Activated CD8-positive, alpha-beta T cell treated with anti-CD3 and anti-CD28 coated beads for 36 hours (primary cell): ENCODE measurements at regions of chr11 and their contacts with region 1.

Region 1: DNA sequence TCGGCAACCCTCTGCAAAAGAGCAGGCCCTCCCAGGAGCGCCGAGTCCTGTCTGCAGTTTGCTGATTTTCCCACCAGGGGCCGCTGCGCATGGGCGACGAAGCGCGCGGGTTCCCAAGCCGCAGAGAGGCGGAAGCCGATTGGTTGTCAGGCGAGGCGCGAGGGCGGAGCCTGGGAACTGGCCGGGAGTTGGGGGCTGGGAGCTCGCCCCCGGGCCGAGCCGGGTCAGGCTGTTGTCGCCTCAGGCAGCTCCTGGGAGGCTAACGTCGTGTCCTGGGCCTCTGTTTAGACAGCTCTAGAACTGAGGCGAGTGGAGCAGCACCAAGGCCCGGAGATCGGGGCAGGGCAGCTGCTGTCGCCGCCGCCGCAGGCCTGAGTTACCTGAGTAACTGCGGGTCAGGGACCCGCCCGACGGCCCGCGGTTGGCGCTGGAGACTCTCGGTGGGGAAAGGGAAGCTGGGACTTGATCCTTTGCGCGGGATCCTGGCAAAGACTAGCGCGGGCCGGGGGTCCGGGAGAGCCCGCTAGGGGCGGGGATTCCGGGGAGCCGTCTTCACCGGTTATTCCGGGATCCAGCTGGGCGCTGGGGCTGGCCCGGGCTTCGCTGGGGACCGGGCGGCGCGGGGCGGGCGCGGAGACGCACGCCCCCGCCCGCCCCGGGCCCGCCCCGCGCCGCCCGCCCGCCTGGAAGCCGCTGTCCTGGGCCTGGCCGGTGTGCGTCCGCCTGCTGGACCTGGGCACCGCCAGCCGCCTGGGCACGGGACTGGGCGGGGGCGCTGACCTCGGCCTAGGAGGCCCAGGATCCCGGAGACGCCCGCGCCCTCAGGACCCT is at the start of gene STIM1:
- DNase-seq: peak; percentile 98
- ATAC-seq: peak; percentile 79
- H3K4me3 Mint-ChIP-seq: peak within 1 kb of the TSS; percentile 87
- H3K27ac Mint-ChIP-seq: peak within 1 kb of the TSS; percentile 98
- H3K4me1 Mint-ChIP-seq: peaks cover 60% of the 10 kb centered on the region
- H3K27me3 Mint-ChIP-seq: no peaks in the 10 kb centered on the region
- CTCF ChIP-seq: peak; percentile 89
- total RNA-seq, gene STIM1: 60.8 to 61.4 TPM

Region 2: GRCh38 chr11:3609416-3610265 is 245.6 kb before region 1 on chr11:
- CTCF ChIA-PET with region 1: no interaction called
- POLR2A ChIA-PET with region 1: no interaction called
- intact Hi-C with region 1: no loop called
- DNase-seq: peak; percentile 25
- ATAC-seq: peak; percentile 66
- H3K4me3 Mint-ChIP-seq: no peak overlapping the region
- H3K27ac Mint-ChIP-seq: no peak overlapping the region
- H3K4me1 Mint-ChIP-seq: peaks cover 6% of the 10 kb centered on the region
- H3K27me3 Mint-ChIP-seq: no peaks in the 10 kb centered on the region
- CTCF ChIP-seq: peak; percentile 84

Region 3: DNA sequence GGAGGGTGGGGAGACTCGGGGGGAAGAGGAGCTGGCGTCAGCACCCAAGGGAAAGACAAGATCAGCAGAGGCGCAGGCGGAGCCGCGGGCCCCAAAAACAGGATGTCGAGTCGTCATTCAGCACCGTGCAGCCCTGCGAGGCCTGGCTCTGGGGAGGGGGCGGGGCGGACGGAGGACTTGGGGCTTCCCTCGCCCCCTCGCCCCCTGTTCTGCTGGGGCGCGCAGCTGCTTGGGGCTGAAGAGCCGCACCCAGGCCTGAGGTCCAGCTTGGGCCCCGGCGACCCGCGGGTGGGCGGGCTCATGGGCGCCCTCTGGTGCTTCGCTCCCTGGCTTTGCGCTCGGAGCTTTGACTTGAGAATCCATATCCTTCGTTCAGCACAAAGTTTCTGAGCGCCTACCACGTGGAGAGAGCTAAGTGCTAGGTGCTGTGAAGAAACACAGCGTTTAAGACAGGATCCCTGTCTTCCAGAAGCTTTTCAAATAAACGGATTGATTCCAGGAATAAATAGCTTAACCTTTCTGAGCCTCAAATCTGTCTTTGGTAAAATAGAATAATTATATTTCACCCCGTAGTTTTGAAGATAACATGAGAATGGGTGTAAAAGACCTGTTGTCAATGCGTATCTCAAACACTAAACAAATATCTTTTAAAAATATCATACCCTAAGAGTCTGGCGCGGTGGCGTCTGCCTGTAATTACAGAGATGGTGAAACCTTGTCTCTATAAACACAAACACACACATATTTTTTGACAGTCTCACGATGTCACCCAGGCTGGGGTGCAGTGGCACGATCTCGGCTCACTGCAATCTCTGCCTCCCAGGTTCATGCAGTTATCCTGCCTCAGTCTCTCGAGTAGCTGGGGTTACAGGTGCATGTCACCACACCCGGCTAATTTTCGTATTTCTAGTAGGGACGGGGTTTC is 13.5 kb before region 1 on chr11:
- CTCF ChIA-PET with region 1: interaction called, 221 read pairs
- POLR2A ChIA-PET with region 1: interaction called, 216 read pairs
- intact Hi-C with region 1: no loop called
- DNase-seq: peak; percentile 40
- ATAC-seq: no peak
- H3K4me3 Mint-ChIP-seq: peak overlapping the region; percentile 87
- H3K27ac Mint-ChIP-seq: peak overlapping the region; percentile 94
- H3K4me1 Mint-ChIP-seq: peaks cover 51% of the 10 kb centered on the region
- H3K27me3 Mint-ChIP-seq: no peaks in the 10 kb centered on the region
- CTCF ChIP-seq: peak; percentile 69

Region 4: DNA sequence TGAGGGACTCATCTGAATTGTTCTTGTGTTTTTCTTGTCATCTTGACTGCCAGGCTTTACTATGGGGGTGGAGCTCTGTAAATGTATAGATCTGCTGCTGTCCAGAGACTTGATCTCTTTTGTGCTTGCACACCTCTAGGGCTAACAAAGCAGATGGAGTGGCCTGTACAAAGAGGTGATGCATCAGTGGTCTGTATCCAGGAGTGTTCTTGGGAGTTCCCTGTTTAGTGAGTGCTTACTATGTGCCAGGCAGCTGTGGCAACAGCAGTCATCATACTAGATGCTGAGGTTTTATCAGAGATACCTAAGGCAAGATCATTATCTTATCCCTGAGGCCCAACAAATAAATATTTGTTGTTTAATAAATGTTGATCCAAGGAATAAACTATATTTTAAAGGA is 33.7 kb after region 1 on chr11:
- CTCF ChIA-PET with region 1: interaction called, 13 read pairs
- POLR2A ChIA-PET with region 1: no interaction called
- intact Hi-C with region 1: loop called (anchors 5 kb)
- DNase-seq: no peak
- ATAC-seq: no peak
- H3K4me3 Mint-ChIP-seq: no peak overlapping the region
- H3K27ac Mint-ChIP-seq: no peak overlapping the region
- H3K4me1 Mint-ChIP-seq: peaks cover 58% of the 10 kb centered on the region
- H3K27me3 Mint-ChIP-seq: no peaks in the 10 kb centered on the region
- CTCF ChIP-seq: no peak

Region 5: GRCh38 chr11:3927133-3927796 is 72.1 kb after region 1 on chr11:
- CTCF ChIA-PET with region 1: interaction called, 24 read pairs
- POLR2A ChIA-PET with region 1: interaction called, 6 read pairs
- intact Hi-C with region 1: no loop called
- DNase-seq: no peak
- ATAC-seq: no peak
- H3K4me3 Mint-ChIP-seq: no peak overlapping the region
- H3K27ac Mint-ChIP-seq: no peak overlapping the region
- H3K4me1 Mint-ChIP-seq: peaks cover 36% of the 10 kb centered on the region
- H3K27me3 Mint-ChIP-seq: no peaks in the 10 kb centered on the region
- CTCF ChIP-seq: no peak

Region 6: DNA sequence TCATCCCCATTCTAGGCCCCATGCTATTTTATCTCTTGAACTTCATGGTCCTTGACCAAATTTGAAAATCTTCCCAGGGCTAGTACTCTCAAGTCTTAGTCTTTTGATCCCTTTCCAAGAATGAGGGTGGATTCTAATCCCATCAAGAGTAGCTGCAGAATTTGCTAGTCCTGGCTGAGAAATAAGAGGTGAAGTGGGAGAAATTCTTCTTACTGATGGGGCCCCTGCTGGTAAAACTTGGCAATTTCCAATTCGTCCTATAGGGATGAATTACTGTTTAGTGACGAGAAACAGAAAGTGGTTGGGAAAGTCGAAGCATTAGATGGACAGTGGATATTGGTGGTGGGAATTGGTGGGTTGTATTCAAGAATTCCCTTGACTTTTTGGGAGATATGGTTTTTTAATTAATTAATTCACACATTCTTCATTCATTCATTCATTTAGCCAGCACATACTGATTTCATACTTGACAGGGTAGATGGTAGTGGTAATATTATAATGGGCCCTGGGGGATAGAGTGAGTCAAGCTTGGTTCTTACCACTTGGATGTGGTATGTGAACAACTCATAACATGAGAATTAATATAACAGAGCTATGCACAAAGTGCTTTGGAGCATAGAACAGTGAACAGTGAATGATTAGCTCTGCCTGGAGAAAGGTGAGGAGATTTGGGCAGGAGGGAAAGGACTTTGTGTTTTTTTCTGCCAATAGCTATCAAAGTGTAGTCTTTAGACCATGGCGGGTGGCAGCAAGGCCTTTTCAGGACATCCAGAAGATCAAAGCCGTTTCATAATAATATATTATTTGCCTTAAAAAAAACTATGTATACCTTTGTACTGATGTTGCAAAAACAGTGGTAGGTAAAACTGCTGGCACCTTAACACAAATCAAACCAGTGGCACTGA is 104.1 kb after region 1 on chr11:
- CTCF ChIA-PET with region 1: interaction called, 36 read pairs
- POLR2A ChIA-PET with region 1: interaction called, 11 read pairs
- intact Hi-C with region 1: loop called (anchors 5 kb)
- DNase-seq: no peak
- ATAC-seq: peak; percentile 64
- H3K4me3 Mint-ChIP-seq: no peak overlapping the region
- H3K27ac Mint-ChIP-seq: no peak overlapping the region
- H3K4me1 Mint-ChIP-seq: peaks cover 77% of the 10 kb centered on the region
- H3K27me3 Mint-ChIP-seq: no peaks in the 10 kb centered on the region
- CTCF ChIP-seq: peak; percentile 11

Region 7: DNA sequence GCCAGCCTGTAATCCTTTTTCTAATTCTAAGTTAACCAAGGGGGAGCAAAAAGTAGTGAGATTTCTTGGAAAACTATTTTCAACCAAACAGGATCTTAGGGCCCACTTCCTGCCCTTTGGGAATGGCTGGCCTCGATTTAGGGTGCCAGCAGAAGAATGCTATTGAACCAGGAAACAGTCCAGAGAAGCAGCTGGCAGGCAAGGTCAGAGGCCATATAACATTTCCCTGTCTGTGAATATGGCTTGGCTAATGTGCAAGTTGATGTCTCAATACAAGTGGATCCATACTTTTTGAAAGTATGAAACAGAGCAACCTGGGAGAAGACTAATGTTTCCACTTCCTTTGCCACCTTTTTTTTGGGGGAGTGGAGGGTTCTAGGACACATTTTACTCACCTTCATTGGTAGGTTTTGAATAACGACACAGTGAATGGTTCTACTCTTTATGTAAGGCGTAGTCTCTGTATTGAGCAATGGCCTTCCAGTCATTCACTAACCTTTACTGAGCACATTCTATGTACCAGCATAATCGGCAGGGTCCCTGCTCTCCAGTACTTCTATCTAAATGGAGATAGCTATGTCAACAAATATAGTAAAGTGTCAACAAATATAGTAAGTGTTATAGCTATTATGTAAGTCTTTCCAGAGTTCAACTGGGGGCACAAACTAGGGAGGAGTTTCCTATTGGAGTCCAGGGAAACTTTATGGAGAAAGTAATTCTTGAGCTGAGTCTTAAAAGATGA is 205.2 kb after region 1 on chr11:
- CTCF ChIA-PET with region 1: interaction called, 775 read pairs
- POLR2A ChIA-PET with region 1: interaction called, 11 read pairs
- intact Hi-C with region 1: no loop called
- DNase-seq: no peak
- ATAC-seq: no peak
- H3K4me3 Mint-ChIP-seq: no peak overlapping the region
- H3K27ac Mint-ChIP-seq: no peak overlapping the region
- H3K4me1 Mint-ChIP-seq: peaks cover 44% of the 10 kb centered on the region
- H3K27me3 Mint-ChIP-seq: no peaks in the 10 kb centered on the region
- CTCF ChIP-seq: no peak